A673 (cell line): ENCODE measurements at regions of chr2 and their contacts with region 1.

Region 1: GRCh38 chr2:25009954-25010353 is 31.9 kb upstream of the EFR3B start:
- DNase-seq: peak; percentile 17
- H3K4me3 ChIP-seq: no peak overlapping the region
- H3K27ac ChIP-seq: no peak overlapping the region
- H3K4me1 ChIP-seq: no peaks in the 10 kb centered on the region
- H3K27me3 ChIP-seq: no peaks in the 10 kb centered on the region
- CTCF ChIP-seq: no peak

Region 2: GRCh38 chr2:25032901-25033300 is 22.9 kb after region 1 on chr2:
- CTCF ChIA-PET with region 1: no interaction called
- POLR2A ChIA-PET with region 1: interaction called, 13 read pairs
- intact Hi-C with region 1: no loop called
- DNase-seq: no peak
- H3K4me3 ChIP-seq: no peak overlapping the region
- H3K27ac ChIP-seq: no peak overlapping the region
- H3K4me1 ChIP-seq: no peaks in the 10 kb centered on the region
- H3K27me3 ChIP-seq: no peaks in the 10 kb centered on the region
- CTCF ChIP-seq: no peak